Ascending aorta (tissue), 2 donors: ENCODE measurements at regions of chr10 and their contacts with region 1.

Region 1: DNA sequence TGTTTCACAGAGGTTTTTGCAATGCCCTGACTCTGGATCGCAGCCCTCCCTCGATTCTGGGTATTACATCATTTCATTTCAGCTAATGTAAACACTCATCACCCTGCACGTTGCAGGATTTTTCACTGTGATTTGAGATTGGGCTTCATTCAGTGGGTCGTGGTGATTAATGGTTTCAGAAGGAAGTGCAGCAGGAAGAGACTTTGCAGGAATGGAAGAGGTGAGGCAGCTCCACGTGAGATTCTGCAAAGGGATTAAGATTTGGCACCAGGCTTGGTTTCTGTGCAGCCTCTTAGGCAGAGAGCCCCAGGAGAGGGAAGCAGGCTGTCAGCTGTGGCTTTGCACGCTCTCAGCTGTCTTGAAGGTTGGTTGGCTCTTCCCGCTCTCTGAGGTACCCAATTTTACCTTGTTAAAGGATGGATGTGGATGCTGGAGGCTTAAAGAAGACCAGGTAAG is 95.2 kb downstream of the PLCE1 start:
- DNase-seq: no peak
- H3K4me3 ChIP-seq: peak overlapping the region; percentile 34 to 57
- H3K27ac ChIP-seq: peak overlapping the region; percentile 84 to 92
- H3K4me1 ChIP-seq: peaks cover 0 to 30% of the 10 kb centered on the region in 2 donors
- H3K27me3 ChIP-seq: no peaks in the 10 kb centered on the region
- CTCF ChIP-seq: no peak

Region 2: DNA sequence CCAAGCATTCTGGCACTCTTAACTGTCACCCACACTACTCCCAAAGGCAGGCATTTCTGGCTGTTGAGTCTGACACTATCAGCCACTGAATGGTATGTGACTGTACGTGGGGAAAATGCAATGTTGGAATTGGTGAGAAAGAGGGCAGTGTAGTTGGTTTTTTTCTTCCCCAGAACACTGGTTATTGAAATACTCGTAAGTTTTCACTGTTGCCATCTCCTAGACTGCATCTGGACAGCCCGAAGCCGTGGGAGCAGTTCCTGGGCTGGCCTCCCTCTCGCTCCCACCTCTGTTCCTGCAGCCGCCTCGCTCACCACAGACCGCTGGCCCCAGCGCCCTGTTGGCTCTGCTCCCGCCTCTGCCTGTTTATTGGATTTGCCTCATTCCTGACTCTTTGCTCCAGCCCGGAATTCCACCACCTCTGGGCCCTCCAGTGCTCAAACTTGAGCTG is 89.5 kb before region 1 on chr10:
- intact Hi-C with region 1: loop called (anchors 5 kb)
- DNase-seq: peak in 1 of 2 donors; percentile 84
- H3K4me3 ChIP-seq: peak overlapping the region in 1 of 2 donors; percentile 18
- H3K27ac ChIP-seq: peak overlapping the region; percentile 66 to 89
- H3K4me1 ChIP-seq: peaks cover 0 to 20% of the 10 kb centered on the region in 2 donors
- H3K27me3 ChIP-seq: no peaks in the 10 kb centered on the region
- CTCF ChIP-seq: peak in 1 of 3 experiments; percentile 12

Region 3: GRCh38 chr10:94111367-94111766 is 22.4 kb after region 1 on chr10:
- intact Hi-C with region 1: loop called (anchors 2 kb)
- DNase-seq: no peak
- H3K4me3 ChIP-seq: peak overlapping the region in 1 of 2 donors; percentile 36
- H3K27ac ChIP-seq: peak overlapping the region; percentile 67 to 74
- H3K4me1 ChIP-seq: peaks cover 4 to 27% of the 10 kb centered on the region in 2 donors
- H3K27me3 ChIP-seq: no peaks in the 10 kb centered on the region
- CTCF ChIP-seq: no peak

Region 4: GRCh38 chr10:94129393-94130130 is 40.6 kb after region 1 on chr10:
- intact Hi-C with region 1: loop called (anchors 5 kb)
- DNase-seq: peak in 1 of 2 donors; percentile 80
- H3K4me3 ChIP-seq: no peak overlapping the region
- H3K27ac ChIP-seq: peak overlapping the region; percentile 54 to 69
- H3K4me1 ChIP-seq: peaks cover 11 to 57% of the 10 kb centered on the region in 2 donors
- H3K27me3 ChIP-seq: no peaks in the 10 kb centered on the region
- CTCF ChIP-seq: no peak

Region 5: GRCh38 chr10:94146746-94147145 is 57.8 kb after region 1 on chr10:
- intact Hi-C with region 1: loop called (anchors 5 kb)
- DNase-seq: no peak
- H3K4me3 ChIP-seq: no peak overlapping the region
- H3K27ac ChIP-seq: peak overlapping the region; percentile 73
- H3K4me1 ChIP-seq: peaks cover 3 to 23% of the 10 kb centered on the region in 2 donors
- H3K27me3 ChIP-seq: no peaks in the 10 kb centered on the region
- CTCF ChIP-seq: no peak

Region 6: DNA sequence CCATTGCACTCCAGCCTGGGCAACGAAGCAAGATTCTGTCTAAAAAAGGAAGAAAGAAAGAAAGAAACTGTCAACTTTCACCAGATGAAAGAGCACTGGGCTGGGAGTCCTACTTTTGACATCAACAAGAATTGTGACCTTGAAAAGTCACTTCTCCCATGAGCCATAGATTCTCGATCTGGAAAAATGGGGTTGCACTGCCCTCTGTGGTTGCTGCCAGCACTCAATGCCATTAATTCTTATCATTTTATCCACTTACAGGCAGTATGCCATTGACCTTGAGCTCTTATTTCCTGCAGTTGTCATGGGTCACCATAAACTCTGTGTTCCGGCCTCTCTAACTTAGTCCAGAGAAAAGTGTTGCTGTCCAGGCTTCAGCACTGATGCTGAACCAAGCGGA is 136.6 kb after region 1 on chr10:
- intact Hi-C with region 1: loop called (anchors 2 kb)
- DNase-seq: no peak
- H3K4me3 ChIP-seq: no peak overlapping the region
- H3K27ac ChIP-seq: peak overlapping the region; percentile 49 to 57
- H3K4me1 ChIP-seq: peaks cover 0 to 29% of the 10 kb centered on the region in 2 donors
- H3K27me3 ChIP-seq: no peaks in the 10 kb centered on the region
- CTCF ChIP-seq: peak in 1 of 3 experiments; percentile 44